Psoas muscle (tissue), 8 donors: ENCODE measurements at regions of chr22 and their contacts with region 1.

Region 1: DNA sequence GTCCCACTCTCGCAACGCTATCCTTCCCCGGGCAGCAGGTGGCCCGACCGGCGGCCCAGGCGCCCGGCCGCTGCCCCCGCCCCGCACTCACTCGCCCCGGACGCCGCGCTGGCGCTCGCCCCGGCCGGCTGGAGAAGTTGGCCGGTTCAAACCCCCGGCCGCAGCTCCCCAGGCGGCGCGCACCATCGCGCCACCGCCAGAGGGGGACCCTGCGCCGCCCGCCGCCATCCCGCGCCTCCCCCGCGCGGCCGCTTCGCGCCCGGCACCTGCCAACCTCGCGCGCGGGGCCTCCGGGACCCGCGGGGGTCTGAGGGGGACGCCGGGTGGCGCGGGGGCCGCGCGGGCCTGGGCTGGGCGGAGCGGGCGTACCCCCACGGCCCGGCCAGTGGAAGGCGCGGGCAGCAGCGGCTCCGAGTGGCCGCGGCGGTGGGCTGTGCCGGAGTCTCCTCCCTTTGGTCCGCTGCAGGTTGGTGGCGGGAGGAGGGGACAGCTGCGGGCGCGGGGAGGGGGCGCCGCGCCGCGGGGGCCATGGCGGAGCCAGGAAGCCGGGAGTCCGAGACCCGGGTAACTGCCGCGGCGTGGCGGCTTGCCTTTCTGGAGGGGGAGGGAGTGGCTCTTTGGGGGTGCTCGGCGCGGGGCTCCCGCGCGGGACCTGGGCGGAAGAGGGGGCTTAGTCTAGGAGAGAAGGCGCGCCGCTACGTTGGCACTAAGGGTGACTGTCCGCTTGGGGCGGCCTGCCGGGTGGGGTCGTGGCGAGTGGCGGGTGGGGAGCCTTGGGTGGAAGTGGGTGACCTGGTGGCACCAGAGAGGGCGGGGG is at the starts of genes MPST and TST:
- DNase-seq: peak; percentile 84 to 91
- ATAC-seq: peak; percentile 87 to 91 (median 88)
- H3K4me3 ChIP-seq: peak within 1 kb of the TSS; percentile 92
- H3K27ac ChIP-seq: peak within 1 kb of the TSS; percentile 86
- H3K4me1 ChIP-seq: peaks cover 46% of the 10 kb centered on the region
- H3K27me3 ChIP-seq: no peaks in the 10 kb centered on the region
- CTCF ChIP-seq: peak; percentile 52
- total RNA-seq, gene MPST: 31.5 to 58.0 (median 41.7) TPM
- total RNA-seq, gene TST: 18.4 to 46.9 (median 33.1) TPM

Region 2: DNA sequence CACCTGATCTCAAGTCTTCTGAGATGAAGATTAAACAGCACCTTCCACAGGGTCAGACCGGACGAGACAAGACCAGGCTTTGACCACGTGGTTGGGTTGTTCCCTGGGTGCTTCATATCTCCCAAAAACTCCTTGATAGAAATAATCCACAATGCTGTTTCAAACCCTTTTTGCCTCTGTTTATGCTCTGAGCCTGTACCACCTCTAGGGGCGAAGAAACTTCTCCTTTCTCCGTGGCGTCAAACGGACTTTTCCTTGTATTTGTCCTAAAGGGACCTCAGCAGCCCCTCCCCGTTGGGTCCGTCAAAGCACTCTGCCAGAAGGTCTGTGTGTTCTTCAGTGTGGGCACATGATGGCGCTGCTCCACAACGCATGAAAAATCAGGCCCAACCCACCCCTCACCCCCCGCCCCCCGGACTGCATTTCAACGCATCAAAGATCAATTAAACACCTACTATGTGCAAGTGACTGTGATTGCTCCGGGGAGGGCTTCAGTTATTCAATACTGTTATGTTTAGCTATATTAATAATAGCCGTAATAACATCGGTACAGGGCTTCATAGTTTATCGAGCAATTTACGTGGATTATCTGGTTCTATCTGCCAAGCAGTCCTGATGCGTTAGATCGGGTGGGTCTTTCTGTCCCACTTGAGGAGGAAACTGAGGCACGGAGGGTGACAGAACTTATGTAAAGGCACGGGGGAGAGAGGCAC is 473.3 kb before region 1 on chr22:
- intact Hi-C with region 1: loop called in 1 of 2 experiments (anchors 10 kb)
- DNase-seq: peak; percentile 32 to 59
- ATAC-seq: peak in 3 of 4 donors; percentile 72 to 78 (median 72)
- H3K4me3 ChIP-seq: no peak overlapping the region
- H3K27ac ChIP-seq: no peak overlapping the region
- H3K4me1 ChIP-seq: no peaks in the 10 kb centered on the region
- H3K27me3 ChIP-seq: peaks cover 0 to 41% (median 6%) of the 10 kb centered on the region in 3 donors
- CTCF ChIP-seq: peak; percentile 47

Region 3: GRCh38 chr22:37051391-37052385 is 32.2 kb after region 1 on chr22 and contains the start of gene KCTD17:
- intact Hi-C with region 1: no loop called
- DNase-seq: peak; percentile 78
- ATAC-seq: peak; percentile 57 to 82 (median 71)
- H3K4me3 ChIP-seq: peak within 1 kb of the TSS; percentile 68
- H3K27ac ChIP-seq: no peak within 1 kb of the TSS
- H3K4me1 ChIP-seq: no peaks in the 10 kb centered on the region
- H3K27me3 ChIP-seq: peaks cover 0 to 21% (median 6%) of the 10 kb centered on the region in 3 donors
- CTCF ChIP-seq: no peak
- total RNA-seq, gene KCTD17: 1.5 to 3.4 (median 2.4) TPM